HepG2 (cell line): ENCODE measurements at regions of chr5 and their contacts with region 1.

Region 1: GRCh38 chr5:144203750-144204596 is 33.3 kb downstream of the KCTD16 start:
- DNase-seq: peak; percentile 42
- ATAC-seq: peak; percentile 69
- H3K4me3 ChIP-seq: no peak overlapping the region
- H3K27ac ChIP-seq: no peak overlapping the region
- H3K4me1 ChIP-seq: no peaks in the 10 kb centered on the region
- H3K27me3 ChIP-seq: peaks cover 3 to 20% of the 10 kb centered on the region in 2 experiments; a peak in 4 of 5 replicates
- CTCF ChIP-seq: peak; percentile 77
- EP300 ChIP-seq: no peak
- POLR2A ChIP-seq: no peak
- RAD21 ChIP-seq: peak; percentile 54

Region 2: DNA sequence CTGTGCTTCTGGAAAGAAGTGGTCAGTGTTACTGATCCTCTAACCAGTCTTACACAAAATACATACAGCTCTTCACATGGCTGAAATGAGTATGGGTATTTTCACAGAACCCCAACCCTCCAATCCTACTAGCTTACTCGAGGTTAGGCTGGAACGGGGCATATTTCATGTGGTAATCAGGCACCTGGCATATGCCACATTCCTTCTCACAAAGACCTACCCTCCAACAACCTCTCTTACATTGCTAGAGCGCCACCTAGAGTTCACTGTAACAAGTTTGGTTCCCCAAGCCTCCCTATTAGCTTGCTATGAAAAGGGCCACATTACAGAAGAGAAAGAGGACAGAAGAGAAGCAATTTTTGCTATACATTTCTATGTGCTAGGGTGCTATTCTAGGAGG is 1033.9 kb after region 1 on chr5:
- CTCF ChIA-PET with region 1: interaction called, 13 read pairs
- POLR2A ChIA-PET with region 1: no interaction called
- in situ Hi-C with region 1: loop called (anchors 10 kb)
- intact Hi-C with region 1: no loop called
- DNase-seq: peak; percentile 50
- ATAC-seq: peak; percentile 88
- H3K4me3 ChIP-seq: no peak overlapping the region
- H3K27ac ChIP-seq: no peak overlapping the region
- H3K4me1 ChIP-seq: no peaks in the 10 kb centered on the region
- H3K27me3 ChIP-seq: no peaks in the 10 kb centered on the region
- CTCF ChIP-seq: peak; percentile 76
- EP300 ChIP-seq: no peak
- POLR2A ChIP-seq: no peak
- RAD21 ChIP-seq: peak; percentile 38; the same call in 1 of the 2 replicates

Region 3: GRCh38 chr5:145347026-145347616 is 1143.1 kb after region 1 on chr5:
- CTCF ChIA-PET with region 1: no interaction called
- POLR2A ChIA-PET with region 1: no interaction called
- in situ Hi-C with region 1: no loop called
- intact Hi-C with region 1: loop called (anchors 2 kb)
- DNase-seq: peak; percentile 9
- ATAC-seq: peak; percentile 84
- H3K4me3 ChIP-seq: no peak overlapping the region
- H3K27ac ChIP-seq: no peak overlapping the region
- H3K4me1 ChIP-seq: no peaks in the 10 kb centered on the region
- H3K27me3 ChIP-seq: no peaks in the 10 kb centered on the region
- CTCF ChIP-seq: peak; percentile 58
- EP300 ChIP-seq: no peak
- POLR2A ChIP-seq: no peak
- RAD21 ChIP-seq: no peak

Region 4: DNA sequence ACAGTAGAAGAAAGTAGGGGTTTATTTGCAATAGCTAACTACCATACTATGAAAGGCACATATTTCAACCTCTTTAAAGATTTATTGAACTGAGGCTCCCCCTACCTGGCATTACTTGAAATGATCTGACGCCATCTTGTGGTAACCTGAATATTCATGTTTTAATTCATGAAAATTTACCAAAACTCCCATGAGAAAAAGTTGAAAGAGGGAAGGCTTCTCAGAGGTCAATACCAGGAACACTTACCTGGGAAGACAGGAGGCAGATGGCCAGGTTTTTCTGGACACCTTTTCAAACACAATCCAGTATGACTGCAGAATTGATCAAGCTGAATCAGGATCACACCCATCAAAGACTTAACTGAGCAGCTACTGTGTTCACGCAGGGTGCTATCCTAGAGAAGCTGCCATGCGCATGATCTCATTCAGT is 1621.8 kb after region 1 on chr5:
- CTCF ChIA-PET with region 1: no interaction called
- POLR2A ChIA-PET with region 1: no interaction called
- in situ Hi-C with region 1: no loop called
- intact Hi-C with region 1: loop called (anchors 5 kb)
- DNase-seq: peak; percentile 61
- ATAC-seq: peak; percentile 66
- H3K4me3 ChIP-seq: no peak overlapping the region
- H3K27ac ChIP-seq: no peak overlapping the region
- H3K4me1 ChIP-seq: peaks cover 25% of the 10 kb centered on the region
- H3K27me3 ChIP-seq: no peaks in the 10 kb centered on the region
- CTCF ChIP-seq: peak; percentile 72
- EP300 ChIP-seq: no peak
- POLR2A ChIP-seq: no peak
- RAD21 ChIP-seq: peak; percentile 33; the same call in 1 of the 2 replicates

Region 5: GRCh38 chr5:146130440-146131045 is 1926.6 kb after region 1 on chr5:
- CTCF ChIA-PET with region 1: no interaction called
- POLR2A ChIA-PET with region 1: no interaction called
- in situ Hi-C with region 1: no loop called
- intact Hi-C with region 1: loop called (anchors 10 kb)
- DNase-seq: peak; percentile 4
- ATAC-seq: no peak
- H3K4me3 ChIP-seq: no peak overlapping the region
- H3K27ac ChIP-seq: no peak overlapping the region
- H3K4me1 ChIP-seq: no peaks in the 10 kb centered on the region
- H3K27me3 ChIP-seq: no peaks in the 10 kb centered on the region
- CTCF ChIP-seq: peak; percentile 52
- EP300 ChIP-seq: no peak
- POLR2A ChIP-seq: no peak
- RAD21 ChIP-seq: 0 out of 2 replicates have a peak, but pooled peaks have one; percentile 14